Heart right ventricle (tissue), 16 donors: ENCODE measurements at regions of chr18 and their contacts with region 1.

Region 1: GRCh38 chr18:11034884-11035283 is 114.5 kb downstream of the PIEZO2 start:
- DNase-seq: no peak
- ATAC-seq: no peak
- H3K4me3 ChIP-seq: no peak overlapping the region
- H3K27ac ChIP-seq: no peak overlapping the region
- H3K4me1 ChIP-seq: no peaks in the 10 kb centered on the region
- H3K27me3 ChIP-seq: peaks cover 0 to 20% (median 0%) of the 10 kb centered on the region in 7 donors
- CTCF ChIP-seq: no peak

Region 2: GRCh38 chr18:10560450-10561045 is 474.3 kb before region 1 on chr18:
- intact Hi-C with region 1: loop called in 2 of 10 experiments (anchors 5 kb)
- DNase-seq: peak; percentile 39 to 76
- ATAC-seq: peak; percentile 68 to 85 (median 79)
- H3K4me3 ChIP-seq: peak overlapping the region in 7 of 10 donors; percentile 13 to 45 (median 37)
- H3K27ac ChIP-seq: peak overlapping the region in 3 of 10 donors; percentile 31 to 57 (median 46)
- H3K4me1 ChIP-seq: peaks cover 0 to 18% (median 12%) of the 10 kb centered on the region in 9 donors
- H3K27me3 ChIP-seq: no peaks in the 10 kb centered on the region
- CTCF ChIP-seq: peak; percentile 64 to 82 (median 77)

Region 3: DNA sequence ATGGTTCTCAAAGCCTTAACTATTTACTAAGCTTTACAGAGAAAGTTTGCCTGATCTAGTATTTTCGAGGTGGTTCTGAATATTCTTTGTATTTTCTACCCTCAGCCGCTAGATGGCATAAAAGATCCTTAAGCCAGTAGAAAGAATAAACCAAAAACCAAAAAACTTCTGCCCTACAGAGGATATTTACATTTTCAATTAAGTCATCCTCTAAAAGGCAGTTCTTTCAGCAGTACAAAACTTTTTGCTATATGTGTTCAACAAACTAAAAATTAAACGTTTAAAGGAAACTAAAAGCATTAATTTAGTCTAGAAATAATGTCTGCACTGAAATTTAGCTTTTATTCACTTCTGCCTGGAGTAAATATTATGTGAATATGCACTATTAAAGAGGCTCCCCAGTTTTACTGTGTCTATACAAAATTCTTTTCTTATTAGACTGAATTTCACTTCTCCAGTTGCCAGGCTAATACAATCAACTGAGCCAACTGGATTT is 183.0 kb before region 1 on chr18:
- intact Hi-C with region 1: loop called in 8 of 10 experiments (anchors 2 to 5 kb)
- DNase-seq: no peak
- ATAC-seq: no peak
- H3K4me3 ChIP-seq: no peak overlapping the region
- H3K27ac ChIP-seq: no peak overlapping the region
- H3K4me1 ChIP-seq: no peaks in the 10 kb centered on the region
- H3K27me3 ChIP-seq: peaks cover 0 to 19% (median 0%) of the 10 kb centered on the region in 7 donors
- CTCF ChIP-seq: peak; percentile 46 to 85 (median 74)